ENCODE measurements at regions of chr16 and their contacts with region 1.

Region 1: DNA sequence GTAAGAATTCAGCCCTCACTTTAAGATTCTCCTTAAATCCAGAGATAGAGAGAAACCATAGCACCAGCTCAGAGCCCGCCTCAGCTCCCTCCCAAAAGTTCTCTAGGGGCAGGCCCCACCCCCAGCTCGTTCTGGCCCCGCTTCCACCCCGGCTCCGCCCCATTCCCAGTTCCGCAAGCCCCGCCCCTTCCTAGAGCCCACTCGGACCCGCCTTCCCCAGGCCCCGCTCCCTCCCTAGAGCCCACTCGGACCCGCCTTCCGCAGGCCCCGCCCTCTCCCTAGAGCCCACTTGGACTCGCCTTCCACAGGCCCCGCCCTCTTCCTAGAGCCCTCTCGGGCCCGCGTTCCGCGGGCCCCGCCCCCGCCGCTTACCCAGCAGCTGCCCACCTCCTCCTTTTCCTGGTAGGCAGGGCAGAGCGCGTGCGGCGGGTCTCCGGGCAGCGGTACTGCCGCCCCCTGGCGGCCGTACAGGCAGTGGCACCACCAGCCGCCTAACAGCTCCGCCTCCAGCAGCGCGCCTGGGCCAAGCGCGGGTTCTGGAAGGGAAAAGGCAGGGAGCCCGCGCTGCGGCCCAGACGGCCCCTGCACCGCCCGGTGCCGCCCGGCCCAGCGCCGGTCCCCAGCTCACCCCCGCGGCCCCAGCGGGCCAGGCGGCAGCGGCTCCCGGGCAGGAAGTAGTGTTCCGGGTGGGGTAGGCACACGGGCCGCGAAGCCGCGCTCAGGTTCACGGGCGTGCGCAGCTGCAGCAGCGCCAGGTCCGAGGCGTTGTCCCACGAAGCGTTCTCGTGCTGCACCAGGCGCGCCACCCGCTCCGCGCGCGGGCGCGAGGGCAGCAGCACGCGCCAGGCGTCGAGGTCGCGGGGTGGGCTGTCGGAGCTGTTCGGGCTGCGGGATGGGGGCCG is 6.8 kb upstream of the PRSS8 start:
- DNase-seq: peak; percentile 96
- H3K4me3 ChIP-seq: peak overlapping the region; percentile 51
- H3K27ac ChIP-seq: peak overlapping the region; percentile 84
- H3K27me3 ChIP-seq: peaks cover 5% of the 10 kb centered on the region
- CTCF ChIP-seq: peak; percentile 87

Region 2: GRCh38 chr16:30984669-30985400 is 157.5 kb before region 1 on chr16 and contains the start of gene HSD3B7:
- CTCF ChIA-PET with region 1: interaction called, 32 read pairs
- POLR2A ChIA-PET with region 1: interaction called, 4 read pairs
- DNase-seq: peak; percentile 44
- H3K4me3 ChIP-seq: peak within 1 kb of the TSS; percentile 53
- H3K27ac ChIP-seq: peak within 1 kb of the TSS; percentile 11
- H3K27me3 ChIP-seq: no peaks in the 10 kb centered on the region
- CTCF ChIP-seq: peak; percentile 90
- polyA plus RNA-seq, gene HSD3B7: 6.1 and 9.5 TPM in 2 replicates

Region 3: GRCh38 chr16:31093132-31093703 is 49.1 kb before region 1 on chr16:
- CTCF ChIA-PET with region 1: interaction called, 17 read pairs
- POLR2A ChIA-PET with region 1: no interaction called
- DNase-seq: no peak
- H3K4me3 ChIP-seq: peak overlapping the region; percentile 94
- H3K27ac ChIP-seq: no peak overlapping the region
- H3K27me3 ChIP-seq: no peaks in the 10 kb centered on the region
- CTCF ChIP-seq: no peak

Region 4: DNA sequence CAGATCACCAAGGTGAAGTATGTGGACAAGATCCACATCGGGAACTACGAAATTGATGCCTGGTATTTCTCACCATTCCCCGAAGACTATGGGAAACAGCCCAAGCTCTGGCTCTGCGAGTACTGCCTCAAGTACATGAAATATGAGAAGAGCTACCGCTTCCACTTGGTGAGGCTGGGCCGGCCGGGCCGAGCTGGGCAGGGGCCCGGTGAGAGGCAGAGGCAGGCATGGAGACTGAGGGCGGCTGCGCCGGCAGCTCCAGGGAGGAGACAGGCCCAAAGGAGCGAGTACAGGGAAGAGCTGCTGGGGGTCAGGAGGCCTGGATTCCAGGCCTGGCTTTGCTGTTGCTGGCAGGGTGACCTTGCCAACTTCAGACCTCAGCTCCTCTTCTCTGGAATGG is 15.2 kb before region 1 on chr16:
- CTCF ChIA-PET with region 1: interaction called, 15 read pairs
- POLR2A ChIA-PET with region 1: interaction called, 6 read pairs
- DNase-seq: no peak
- H3K4me3 ChIP-seq: no peak overlapping the region
- H3K27ac ChIP-seq: no peak overlapping the region
- H3K27me3 ChIP-seq: no peaks in the 10 kb centered on the region
- CTCF ChIP-seq: no peak

Region 5: DNA sequence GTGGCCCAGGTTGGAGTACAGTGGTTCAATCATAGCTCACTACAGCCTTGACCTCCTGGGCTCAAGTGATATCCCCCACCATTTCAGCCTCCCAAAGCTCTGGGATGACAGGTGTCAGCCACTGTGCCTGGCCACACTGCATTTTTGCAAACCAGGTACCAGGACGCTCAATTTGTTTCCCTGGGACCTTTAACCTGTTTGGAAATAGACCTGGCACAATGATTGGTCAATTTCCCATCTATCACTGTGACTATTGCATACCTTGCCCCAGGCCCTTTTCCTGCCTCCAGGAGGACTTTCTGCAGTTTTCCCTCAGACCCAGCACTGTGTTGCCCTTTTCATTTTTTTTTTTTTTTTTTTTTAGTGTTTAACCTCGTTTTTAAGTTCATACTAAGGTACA is 26.5 kb after region 1 on chr16:
- CTCF ChIA-PET with region 1: interaction called, 12 read pairs
- POLR2A ChIA-PET with region 1: no interaction called
- DNase-seq: no peak
- H3K4me3 ChIP-seq: no peak overlapping the region
- H3K27ac ChIP-seq: no peak overlapping the region
- H3K27me3 ChIP-seq: peaks cover 5% of the 10 kb centered on the region
- CTCF ChIP-seq: no peak

Region 6: DNA sequence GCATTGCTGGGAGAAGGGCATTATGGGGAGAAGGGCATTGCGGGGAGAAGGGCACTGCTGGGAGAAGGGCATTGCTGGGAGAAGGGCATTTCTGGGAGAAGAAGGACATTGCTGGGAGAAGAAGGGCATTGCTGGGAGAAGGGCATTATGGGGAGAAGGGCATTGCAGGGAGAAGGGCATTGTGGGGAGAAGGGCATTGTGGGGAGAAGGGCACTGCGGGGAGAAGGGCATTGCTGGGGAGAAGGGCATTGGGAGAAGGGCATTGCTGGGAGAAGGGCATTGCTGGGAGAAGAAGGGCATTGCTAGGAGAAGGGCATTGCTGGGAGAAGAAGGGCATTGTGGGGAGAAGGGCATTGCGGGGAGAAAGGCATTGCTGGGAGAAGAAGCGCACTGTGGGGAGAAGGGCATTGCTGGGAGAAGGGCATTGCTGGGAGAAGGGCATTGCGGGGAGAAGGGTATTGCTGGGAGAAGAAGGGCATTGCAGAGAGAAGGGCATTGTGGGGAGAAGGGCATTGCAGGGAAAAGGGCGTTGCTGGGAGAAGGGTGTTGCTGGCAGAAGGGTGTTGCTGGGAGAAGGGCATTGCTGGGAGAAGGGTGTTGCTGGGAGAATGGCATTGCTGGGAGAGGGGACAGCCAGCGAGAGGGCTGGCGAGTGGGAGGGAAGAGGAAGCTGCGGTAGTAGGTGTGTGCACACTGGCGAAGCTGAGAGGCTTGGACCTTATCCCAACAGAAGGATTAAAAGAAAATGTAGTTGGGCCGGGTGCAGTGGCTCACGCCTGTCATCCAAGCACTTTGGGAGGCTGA is 79.2 kb after region 1 on chr16:
- CTCF ChIA-PET with region 1: no interaction called
- POLR2A ChIA-PET with region 1: no interaction called
- DNase-seq: no peak
- H3K4me3 ChIP-seq: no peak overlapping the region
- H3K27ac ChIP-seq: no peak overlapping the region
- H3K27me3 ChIP-seq: peaks cover 22% of the 10 kb centered on the region
- CTCF ChIP-seq: no peak

Region 7: DNA sequence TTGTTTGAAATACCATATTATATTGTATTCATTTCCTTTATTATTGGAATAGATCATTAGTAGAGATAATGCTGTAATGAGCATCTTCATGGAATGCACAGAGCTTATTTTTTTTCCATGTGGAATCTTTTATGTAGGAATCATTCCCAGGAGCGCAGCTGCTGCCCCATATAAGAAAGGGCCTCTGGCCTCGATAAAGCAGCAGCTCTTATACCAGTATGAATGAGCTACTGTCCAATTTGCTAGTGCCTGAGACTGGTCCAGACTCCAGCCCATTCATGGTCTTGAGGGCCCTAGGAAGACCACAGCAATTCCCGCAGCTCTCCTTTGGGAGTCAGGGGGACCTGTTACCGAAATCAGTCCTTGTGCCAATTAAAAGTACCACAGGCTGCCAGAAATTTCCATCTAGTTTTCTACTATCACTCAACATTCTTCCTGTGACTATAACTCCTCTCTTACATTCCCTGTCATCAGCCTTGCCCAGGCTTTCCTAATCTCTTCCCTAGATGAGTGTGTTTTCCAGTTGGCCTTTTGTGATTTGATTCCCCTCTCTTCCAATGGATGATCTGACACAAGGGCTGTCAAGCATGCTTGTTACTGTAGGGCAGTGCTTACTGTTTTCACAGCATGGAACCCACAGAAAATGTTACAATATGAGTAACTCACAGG is 298.3 kb after region 1 on chr16:
- CTCF ChIA-PET with region 1: interaction called, 12 read pairs
- POLR2A ChIA-PET with region 1: interaction called, 3 read pairs
- DNase-seq: no peak
- H3K4me3 ChIP-seq: no peak overlapping the region
- H3K27ac ChIP-seq: no peak overlapping the region
- H3K27me3 ChIP-seq: peaks cover 2% of the 10 kb centered on the region
- CTCF ChIP-seq: no peak